K562 (cell line): ENCODE measurements at regions of chr9 and their contacts with region 1.

Region 1: GRCh38 chr9:130940693-130941576 is 1.9 kb upstream of the FIBCD1 start:
- DNase-seq: peak; percentile 63 to 100 (median 96)
- ATAC-seq: peak; percentile 89
- H3K4me3 ChIP-seq: no peak overlapping the region
- H3K27ac ChIP-seq: no peak overlapping the region
- H3K4me1 ChIP-seq: peaks cover 0 to 42% of the 10 kb centered on the region in 2 experiments; a peak in 3 of 5 replicates
- H3K27me3 ChIP-seq: peaks cover 55 to 84% of the 10 kb centered on the region in 2 experiments
- CTCF ChIP-seq: no peak
- EP300 ChIP-seq: no peak
- POLR2A ChIP-seq: no peak
- RAD21 ChIP-seq: no peak

Region 2: GRCh38 chr9:130701056-130702022 is 239.6 kb before region 1 on chr9:
- CTCF ChIA-PET with region 1: interaction called, 11 read pairs
- POLR2A ChIA-PET with region 1: no interaction called
- in situ Hi-C with region 1: no loop called
- intact Hi-C with region 1: no loop called
- DNase-seq: peak; percentile 65 to 83 (median 72)
- ATAC-seq: peak; percentile 97
- H3K4me3 ChIP-seq: no peak overlapping the region
- H3K27ac ChIP-seq: no peak overlapping the region
- H3K4me1 ChIP-seq: no peaks in the 10 kb centered on the region; a peak in 1 of 5 replicates
- H3K27me3 ChIP-seq: no peaks in the 10 kb centered on the region
- CTCF ChIP-seq: peak; percentile 88 to 97 (median 89)
- EP300 ChIP-seq: no peak
- POLR2A ChIP-seq: no peak
- RAD21 ChIP-seq: peak; percentile 52 to 74

Region 3: DNA sequence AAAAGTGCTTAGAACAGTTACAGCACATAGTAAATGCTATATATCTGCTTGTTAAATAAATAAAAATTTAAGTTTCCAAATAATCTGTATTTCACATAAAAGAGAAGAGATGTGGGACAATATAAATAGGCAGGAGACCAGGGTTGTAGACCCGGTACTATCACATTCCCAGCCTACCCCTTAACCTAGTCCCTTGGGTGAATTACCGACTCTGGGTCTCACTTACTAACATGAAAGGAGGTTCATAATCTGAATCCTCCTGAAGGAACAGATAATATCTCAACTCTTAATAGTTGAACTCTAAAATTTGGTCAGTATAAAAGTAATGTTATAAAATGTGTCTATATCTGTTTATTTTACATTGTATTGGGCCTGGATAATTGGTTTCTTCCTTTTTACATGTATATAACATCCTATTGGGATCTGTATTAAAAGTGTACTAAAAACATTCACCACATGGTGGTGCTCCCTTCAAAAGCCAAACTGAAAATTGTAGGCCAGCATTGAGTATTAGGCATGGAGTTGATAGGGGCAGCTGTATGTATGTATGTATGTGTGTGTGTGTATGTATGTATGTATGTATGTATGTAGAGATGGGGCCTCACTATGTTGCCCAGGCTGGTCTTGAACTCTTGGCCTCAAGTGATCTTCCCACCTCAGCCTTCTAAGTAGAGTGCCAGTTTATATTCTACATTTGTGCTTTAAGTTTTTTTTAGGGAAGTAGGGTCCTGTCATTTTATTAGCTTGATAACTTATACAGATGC is 170.1 kb before region 1 on chr9:
- CTCF ChIA-PET with region 1: interaction called, 22 read pairs
- POLR2A ChIA-PET with region 1: no interaction called
- in situ Hi-C with region 1: no loop called
- intact Hi-C with region 1: loop called (anchors 1 kb)
- DNase-seq: peak; percentile 91 to 98 (median 95)
- ATAC-seq: peak; percentile 89
- H3K4me3 ChIP-seq: no peak overlapping the region
- H3K27ac ChIP-seq: no peak overlapping the region
- H3K4me1 ChIP-seq: peaks cover 6 to 8% of the 10 kb centered on the region in 2 experiments; a peak in 4 of 5 replicates
- H3K27me3 ChIP-seq: no peaks in the 10 kb centered on the region
- CTCF ChIP-seq: no peak
- EP300 ChIP-seq: no peak
- POLR2A ChIP-seq: no peak
- RAD21 ChIP-seq: no peak

Region 4: DNA sequence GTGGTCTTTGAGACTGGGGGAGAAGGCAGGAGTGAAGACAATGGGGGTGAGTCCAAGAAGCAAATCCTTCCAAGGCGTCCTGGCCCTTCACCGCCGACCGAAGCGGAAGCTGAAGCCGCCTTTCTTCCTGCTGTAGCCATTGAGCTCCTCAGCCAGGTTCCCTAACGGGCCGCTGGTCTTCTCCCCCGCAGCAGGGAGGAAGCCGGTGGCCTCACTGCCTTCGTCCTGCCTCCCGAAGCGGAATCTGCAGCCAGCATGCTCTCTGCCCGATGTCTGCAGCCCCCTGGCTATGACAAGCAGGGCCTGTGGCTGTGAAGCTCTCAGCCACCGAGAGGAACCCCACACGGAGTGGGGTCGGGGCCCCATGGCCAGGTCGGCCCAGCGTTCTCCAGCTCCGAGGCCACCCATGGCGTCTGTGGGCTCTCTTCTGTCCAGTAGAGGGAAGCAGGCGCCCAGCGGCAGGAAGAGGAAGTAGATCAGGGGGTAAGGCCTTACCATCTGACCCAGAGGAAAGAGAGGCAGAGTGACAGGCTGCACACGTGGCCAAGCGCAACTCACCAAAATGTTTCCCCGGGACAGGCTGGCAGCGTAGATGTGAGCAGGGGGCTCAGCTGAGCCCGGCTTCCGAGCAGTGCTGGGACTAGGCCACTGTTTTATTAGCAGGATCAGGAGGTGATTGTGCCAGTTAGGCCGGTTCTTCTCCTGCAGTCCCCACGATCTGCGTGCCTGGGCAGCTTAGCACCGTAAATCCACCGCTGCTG is 47.4 kb before region 1 on chr9:
- CTCF ChIA-PET with region 1: no interaction called
- POLR2A ChIA-PET with region 1: interaction called, 9 read pairs
- in situ Hi-C with region 1: no loop called
- intact Hi-C with region 1: loop called (anchors 1 kb)
- DNase-seq: peak; percentile 58 to 90 (median 72)
- ATAC-seq: peak; percentile 73
- H3K4me3 ChIP-seq: no peak overlapping the region
- H3K27ac ChIP-seq: no peak overlapping the region
- H3K4me1 ChIP-seq: peaks cover 6 to 56% of the 10 kb centered on the region in 2 experiments; a peak in 4 of 5 replicates
- H3K27me3 ChIP-seq: peaks cover 23 to 33% of the 10 kb centered on the region in 2 experiments; a peak in 4 of 5 replicates
- CTCF ChIP-seq: no peak
- EP300 ChIP-seq: no peak
- POLR2A ChIP-seq: no peak
- RAD21 ChIP-seq: no peak

Region 5: DNA sequence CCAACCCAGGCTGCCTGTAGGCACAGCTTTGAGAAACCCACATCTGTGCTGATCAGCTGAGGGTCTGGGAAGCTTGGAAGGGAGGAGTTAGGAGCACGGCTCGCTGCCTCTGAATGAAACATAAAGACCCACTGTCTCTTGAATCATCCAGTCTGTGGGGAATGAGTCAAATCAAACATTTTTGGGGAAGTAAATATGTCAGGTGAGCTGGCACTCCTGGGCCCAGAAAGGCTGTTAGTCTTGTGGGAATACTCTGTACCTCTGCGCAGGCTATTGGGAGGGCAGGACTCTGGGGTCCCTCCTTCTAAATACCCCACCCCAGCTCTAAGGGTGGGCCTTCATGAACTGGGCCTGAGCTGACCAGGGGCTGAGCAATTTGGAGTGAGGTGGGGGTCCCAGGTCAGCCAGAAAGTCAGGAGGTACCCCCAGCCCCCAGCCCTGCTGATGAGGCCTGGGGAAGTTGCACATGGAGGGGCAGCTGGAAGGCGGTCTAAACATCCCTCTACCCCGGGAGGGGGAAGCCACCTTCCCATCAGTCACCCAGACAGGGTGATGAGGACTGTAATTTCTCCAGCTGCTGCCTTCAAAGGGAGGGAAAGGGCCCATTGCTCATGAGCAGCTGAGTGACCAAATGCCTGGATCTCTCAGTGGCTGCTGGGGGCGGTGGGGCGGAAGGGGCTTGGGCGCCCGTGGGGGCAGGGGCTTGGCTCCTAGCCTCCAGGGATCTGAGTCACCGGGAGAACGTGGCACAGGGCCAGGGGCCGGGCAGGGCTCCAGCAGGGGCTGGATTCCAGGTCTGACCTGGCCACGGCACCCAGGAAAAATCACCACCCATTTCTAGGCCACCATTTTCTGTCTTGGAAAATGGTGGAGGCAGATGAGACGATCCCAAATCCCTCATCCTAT is 12.7 kb before region 1 on chr9:
- CTCF ChIA-PET with region 1: no interaction called
- POLR2A ChIA-PET with region 1: interaction called, 582 read pairs
- in situ Hi-C with region 1: no loop called
- intact Hi-C with region 1: no loop called
- DNase-seq: peak in 3 of 4 experiments; percentile 64 to 73 (median 66)
- ATAC-seq: no peak
- H3K4me3 ChIP-seq: no peak overlapping the region
- H3K27ac ChIP-seq: no peak overlapping the region
- H3K4me1 ChIP-seq: peaks cover 0 to 52% of the 10 kb centered on the region in 2 experiments; a peak in 2 of 5 replicates
- H3K27me3 ChIP-seq: peaks cover 95 to 100% of the 10 kb centered on the region in 2 experiments
- CTCF ChIP-seq: no peak
- EP300 ChIP-seq: no peak
- POLR2A ChIP-seq: no peak
- RAD21 ChIP-seq: no peak

Region 6: DNA sequence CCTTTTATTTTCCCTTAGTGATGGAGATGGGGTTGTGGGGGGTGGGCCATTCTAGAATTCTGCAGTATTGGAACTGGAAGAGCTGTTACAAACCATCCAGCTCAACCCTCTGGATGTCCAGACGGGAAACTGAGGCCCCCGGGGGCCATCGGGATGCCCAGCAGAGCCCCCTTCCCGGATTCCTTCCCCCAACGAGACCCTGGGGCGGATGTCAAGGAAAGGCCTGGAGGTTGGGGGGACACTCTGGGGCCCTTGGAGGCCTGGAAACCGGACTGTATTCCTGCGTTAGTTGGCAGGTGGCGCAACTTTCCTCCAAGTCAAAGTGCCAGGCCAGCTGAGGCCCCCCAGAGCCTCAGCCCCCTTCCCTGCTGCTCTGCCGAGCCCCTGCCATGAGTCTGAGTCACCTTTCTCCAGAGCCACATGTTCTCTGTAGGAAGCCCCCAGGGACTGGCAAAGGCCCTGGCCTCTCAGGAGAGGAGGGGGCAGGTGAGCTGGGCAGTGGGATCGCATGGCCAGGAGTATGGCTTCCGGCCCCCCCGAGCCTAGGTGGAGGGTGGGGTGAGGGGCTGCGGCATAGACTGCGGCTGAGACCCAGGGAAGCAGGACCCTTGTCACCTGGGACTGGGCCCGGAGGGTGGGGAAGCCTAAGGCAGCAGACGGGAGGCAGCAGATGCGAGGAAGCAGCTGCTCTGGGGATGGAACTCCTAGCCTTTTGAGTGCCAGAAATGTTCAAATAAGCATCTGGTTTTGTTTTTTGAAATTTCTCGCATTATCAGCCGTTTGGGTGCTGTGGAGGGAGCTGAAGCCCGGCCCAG is 15.9 kb after region 1 on chr9:
- CTCF ChIA-PET with region 1: no interaction called
- POLR2A ChIA-PET with region 1: interaction called, 19 read pairs
- in situ Hi-C with region 1: no loop called
- intact Hi-C with region 1: no loop called
- DNase-seq: peak in 3 of 4 experiments; percentile 56 to 63 (median 62)
- ATAC-seq: no peak
- H3K4me3 ChIP-seq: no peak overlapping the region
- H3K27ac ChIP-seq: no peak overlapping the region
- H3K4me1 ChIP-seq: peaks cover 0 to 4% of the 10 kb centered on the region in 2 experiments; a peak in 1 of 5 replicates
- H3K27me3 ChIP-seq: peaks cover 11 to 32% of the 10 kb centered on the region in 2 experiments; a peak in 4 of 5 replicates
- CTCF ChIP-seq: no peak
- EP300 ChIP-seq: no peak
- POLR2A ChIP-seq: no peak
- RAD21 ChIP-seq: no peak

Region 7: DNA sequence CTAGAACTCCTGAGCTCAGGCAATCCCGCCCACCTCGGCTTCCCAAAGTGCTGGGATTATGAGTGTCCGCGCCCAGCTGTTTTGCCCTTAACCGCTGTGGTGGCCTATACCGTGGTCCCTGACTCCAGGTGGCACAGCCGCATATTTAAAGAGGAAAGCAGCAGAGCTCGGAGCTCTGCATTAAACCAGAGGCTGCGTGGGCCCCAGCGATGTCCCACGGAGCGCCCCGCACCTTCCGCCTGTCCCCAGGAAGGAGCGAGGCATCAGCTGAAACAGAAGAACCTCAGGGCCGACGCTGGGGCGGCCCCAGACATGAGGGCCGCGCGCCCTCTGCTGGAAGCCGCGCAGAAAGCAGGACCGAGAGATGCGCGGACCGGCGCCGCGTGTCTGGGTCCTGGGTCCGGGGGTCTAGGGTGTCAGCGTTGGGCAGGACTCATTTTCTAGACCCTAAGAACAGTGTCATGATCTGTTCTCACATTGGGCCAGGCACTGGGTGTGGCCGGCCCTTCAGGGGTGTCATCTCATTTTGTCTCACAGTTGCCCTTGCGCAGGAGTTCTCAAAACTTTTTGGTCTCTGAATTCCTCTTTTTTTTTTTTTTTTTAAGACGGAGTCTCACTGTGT is 105.8 kb after region 1 on chr9:
- CTCF ChIA-PET with region 1: interaction called, 10 read pairs
- POLR2A ChIA-PET with region 1: interaction called, 3 read pairs
- in situ Hi-C with region 1: no loop called
- intact Hi-C with region 1: loop called (anchors 1 kb)
- DNase-seq: peak in 3 of 4 experiments; percentile 99 to 100 (median 99)
- ATAC-seq: peak; percentile 93
- H3K4me3 ChIP-seq: no peak overlapping the region
- H3K27ac ChIP-seq: no peak overlapping the region
- H3K4me1 ChIP-seq: peaks cover 0 to 23% of the 10 kb centered on the region in 2 experiments; a peak in 3 of 5 replicates
- H3K27me3 ChIP-seq: peaks cover 55 to 73% of the 10 kb centered on the region in 2 experiments
- CTCF ChIP-seq: no peak
- EP300 ChIP-seq: no peak
- POLR2A ChIP-seq: no peak
- RAD21 ChIP-seq: no peak